GM12878 (cell line): ENCODE measurements at regions of chr2 and their contacts with region 1.

Region 1: GRCh38 chr2:205706769-205707381 is 24.6 kb downstream of the NRP2 start:
- DNase-seq: peak; percentile 84
- ATAC-seq: peak; percentile 97
- H3K4me3 ChIP-seq: no peak overlapping the region
- H3K27ac ChIP-seq: peak overlapping the region; percentile 96
- H3K4me1 ChIP-seq: peaks cover 37% of the 10 kb centered on the region
- H3K27me3 ChIP-seq: no peaks in the 10 kb centered on the region
- CTCF ChIP-seq: no peak
- EP300 ChIP-seq: peak; percentile 21 to 64; a peak in 1 of 4 replicates
- POLR2A ChIP-seq: peak; percentile 88
- RAD21 ChIP-seq: no peak

Region 2: DNA sequence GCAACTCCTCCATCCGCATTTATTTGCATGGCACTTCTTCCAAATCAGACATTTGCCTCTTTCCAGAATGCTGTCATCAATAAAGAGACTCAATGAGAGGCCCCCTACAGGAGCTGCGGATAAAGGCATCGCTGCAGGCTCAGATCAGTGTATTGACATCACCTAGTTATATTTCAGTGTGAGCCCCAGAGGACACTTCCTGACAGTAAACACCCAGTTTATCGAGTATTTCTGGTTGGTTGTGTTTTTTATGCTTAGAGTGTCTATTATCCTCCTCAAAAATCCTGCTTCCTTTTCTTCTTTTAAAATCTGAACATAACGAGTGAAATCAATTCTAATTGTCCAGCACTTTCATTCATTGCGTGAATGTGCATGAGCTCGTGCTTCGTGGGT is 14.2 kb after region 1 on chr2:
- CTCF ChIA-PET with region 1: interaction called, 13 read pairs
- POLR2A ChIA-PET with region 1: interaction called, 6 read pairs
- RAD21 ChIA-PET with region 1: interaction called, 14 read pairs
- SMC1A ChIA-PET with region 1: interaction called, 19 read pairs
- in situ Hi-C with region 1: no loop called
- intact Hi-C with region 1: no loop called
- DNase-seq: no peak
- ATAC-seq: peak; percentile 75
- H3K4me3 ChIP-seq: no peak overlapping the region
- H3K27ac ChIP-seq: no peak overlapping the region
- H3K4me1 ChIP-seq: peaks cover 17% of the 10 kb centered on the region
- H3K27me3 ChIP-seq: no peaks in the 10 kb centered on the region
- CTCF ChIP-seq: peak; percentile 4 to 41 (median 37); a peak in 2 of 6 replicates
- EP300 ChIP-seq: no peak
- POLR2A ChIP-seq: no peak
- RAD21 ChIP-seq: 0 out of 2 replicates have a peak, but pooled peaks have one; percentile 7

Region 3: DNA sequence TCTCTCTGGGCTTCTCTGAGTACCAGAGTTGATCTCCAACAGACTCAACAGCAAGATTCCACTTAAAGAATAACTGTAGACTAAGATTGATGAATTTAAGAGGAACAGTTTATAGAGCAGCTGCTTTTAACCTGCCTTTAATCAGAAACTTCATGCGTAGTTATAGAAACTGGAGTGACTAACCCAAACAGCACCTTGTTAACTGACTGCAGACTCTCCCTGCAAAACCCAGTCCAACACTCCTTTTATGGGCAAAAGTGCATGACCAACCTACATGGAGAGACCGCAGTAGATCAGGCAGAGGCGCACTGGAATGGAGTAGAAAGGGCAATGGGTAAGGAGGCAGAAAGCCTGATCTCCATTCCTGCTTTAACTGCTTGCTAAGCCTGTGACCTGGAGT is 86.0 kb after region 1 on chr2:
- CTCF ChIA-PET with region 1: no interaction called
- POLR2A ChIA-PET with region 1: no interaction called
- RAD21 ChIA-PET with region 1: no interaction called
- SMC1A ChIA-PET with region 1: no interaction called
- in situ Hi-C with region 1: no loop called
- intact Hi-C with region 1: no loop called
- DNase-seq: no peak
- ATAC-seq: no peak
- H3K4me3 ChIP-seq: no peak overlapping the region
- H3K27ac ChIP-seq: no peak overlapping the region
- H3K4me1 ChIP-seq: no peaks in the 10 kb centered on the region
- H3K27me3 ChIP-seq: no peaks in the 10 kb centered on the region; a peak in 4 of 4 replicates
- CTCF ChIP-seq: no peak
- EP300 ChIP-seq: no peak
- POLR2A ChIP-seq: no peak
- RAD21 ChIP-seq: no peak

Region 4: DNA sequence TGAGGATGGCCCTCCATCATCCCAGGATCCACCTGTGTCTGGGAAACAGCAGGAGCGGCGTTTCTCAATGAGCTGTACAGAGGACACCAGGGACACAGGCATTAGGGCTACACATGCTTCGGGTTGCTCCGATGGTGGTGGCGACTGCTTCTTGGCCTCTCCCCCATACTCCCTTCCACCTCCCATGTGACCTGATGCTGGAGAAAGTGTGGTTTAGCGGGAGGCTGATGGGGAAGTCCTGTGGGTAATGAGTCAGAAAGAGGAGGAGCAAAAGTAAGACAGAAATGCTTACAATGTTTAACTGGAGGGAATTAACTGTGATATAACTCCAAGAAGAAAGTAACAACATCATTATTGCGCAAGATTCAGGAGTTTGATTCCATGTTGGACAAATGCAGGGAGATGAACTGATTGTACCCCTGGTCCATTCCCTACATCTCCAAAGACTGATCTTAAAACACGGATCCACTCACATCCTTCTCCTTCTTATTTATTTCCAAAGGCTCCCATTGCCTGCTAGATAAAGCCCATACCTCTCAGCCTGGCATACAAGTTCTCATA is 162.0 kb after region 1 on chr2:
- CTCF ChIA-PET with region 1: no interaction called
- POLR2A ChIA-PET with region 1: no interaction called
- RAD21 ChIA-PET with region 1: no interaction called
- SMC1A ChIA-PET with region 1: no interaction called
- in situ Hi-C with region 1: no loop called
- intact Hi-C with region 1: no loop called
- DNase-seq: no peak
- ATAC-seq: peak; percentile 42
- H3K4me3 ChIP-seq: no peak overlapping the region
- H3K27ac ChIP-seq: no peak overlapping the region
- H3K4me1 ChIP-seq: no peaks in the 10 kb centered on the region
- H3K27me3 ChIP-seq: no peaks in the 10 kb centered on the region
- CTCF ChIP-seq: no peak
- EP300 ChIP-seq: no peak
- POLR2A ChIP-seq: no peak
- RAD21 ChIP-seq: no peak